ENCODE measurements at regions of chr6 and their contacts with region 1.

Region 1: DNA sequence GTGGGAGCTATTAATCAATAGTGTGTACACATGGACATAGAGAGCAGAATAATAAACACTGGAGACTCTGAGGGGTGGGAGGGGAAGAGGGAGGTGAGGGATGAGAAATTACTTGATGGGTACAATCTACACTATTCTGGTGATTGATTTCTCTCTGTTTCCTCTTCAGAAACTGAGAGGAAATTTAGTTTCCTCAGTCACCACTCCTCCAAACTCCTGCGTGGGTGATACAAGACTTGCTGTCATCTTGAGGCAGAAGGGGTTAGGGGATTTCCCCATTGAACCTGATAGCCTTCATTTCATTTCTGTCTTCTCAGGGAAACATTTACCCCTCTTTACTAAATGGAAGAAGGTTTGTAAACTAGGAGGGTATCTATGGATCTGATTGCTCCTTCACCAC is 84.3 kb upstream of the ESR1 start:
- DNase-seq: no peak
- ATAC-seq: no peak
- H3K4me3 ChIP-seq: no peak overlapping the region
- H3K27ac ChIP-seq: no peak overlapping the region
- H3K4me1 ChIP-seq: no peaks in the 10 kb centered on the region
- H3K27me3 ChIP-seq: no peaks in the 10 kb centered on the region
- CTCF ChIP-seq: no peak
- POLR2A ChIP-seq: no peak
- RAD21 ChIP-seq: no peak

Region 2: GRCh38 chr6:151749341-151749740 is 26.2 kb after region 1 on chr6:
- CTCF ChIA-PET with region 1: no interaction called
- POLR2A ChIA-PET with region 1: interaction called, 10 read pairs
- dilution Hi-C with region 1: no loop called
- in situ Hi-C with region 1: no loop called
- intact Hi-C with region 1: no loop called
- DNase-seq: no peak
- ATAC-seq: no peak
- H3K4me3 ChIP-seq: no peak overlapping the region
- H3K27ac ChIP-seq: no peak overlapping the region
- H3K4me1 ChIP-seq: no peaks in the 10 kb centered on the region
- H3K27me3 ChIP-seq: no peaks in the 10 kb centered on the region
- CTCF ChIP-seq: no peak
- POLR2A ChIP-seq: no peak
- RAD21 ChIP-seq: no peak